ENCODE measurements at regions of chr7 and their contacts with region 1.

Region 1: DNA sequence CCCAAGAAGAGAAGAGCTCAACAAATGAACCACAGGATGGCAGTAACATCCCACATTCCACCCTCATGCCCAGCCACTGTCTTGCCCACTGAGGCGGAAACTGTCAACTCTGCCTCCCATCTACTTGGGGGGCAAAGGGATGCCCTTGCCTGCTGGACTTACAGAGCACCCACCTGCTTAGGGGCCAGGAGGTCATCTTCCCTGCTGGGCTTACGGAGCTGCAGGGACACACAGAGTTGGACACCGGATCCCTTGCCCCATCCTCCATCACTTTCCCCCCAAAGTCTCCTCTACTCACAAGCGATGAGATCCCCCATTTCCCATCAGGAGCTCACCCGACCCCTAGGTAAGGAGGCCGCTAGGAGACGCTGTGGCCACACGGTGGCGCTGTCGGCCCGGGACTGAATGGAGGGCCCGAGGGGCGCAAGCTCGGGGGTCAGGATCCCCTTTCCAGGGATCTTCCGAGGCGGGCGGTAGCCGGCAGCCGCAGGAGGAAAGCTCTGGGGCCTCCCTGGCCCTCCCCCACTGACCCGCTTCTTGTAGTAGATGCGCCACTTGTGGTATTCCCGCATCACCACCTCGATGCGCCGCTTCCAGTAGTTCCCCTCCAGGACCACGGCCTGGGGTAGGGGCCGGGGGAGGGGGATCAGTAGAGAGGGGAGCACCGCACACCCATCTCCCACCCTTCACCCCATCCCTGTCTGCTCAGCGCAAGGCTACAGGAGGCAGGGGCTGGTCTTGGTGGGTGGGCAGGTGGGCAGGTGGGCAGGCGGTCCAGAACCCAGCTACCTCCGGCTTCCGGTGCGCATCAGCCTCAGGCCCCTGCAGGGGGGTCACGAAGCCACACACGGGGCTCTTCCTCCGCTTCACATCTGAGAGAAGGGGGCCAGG is 17.3 kb downstream of the MLXIPL start:
- DNase-seq: peak; percentile 80
- ATAC-seq: peak; percentile 83
- H3K4me3 ChIP-seq: no peak overlapping the region
- H3K4me3 Mint-ChIP-seq: no peak overlapping the region
- H3K27ac ChIP-seq: no peak overlapping the region
- H3K27ac Mint-ChIP-seq: no peak overlapping the region
- H3K4me1 ChIP-seq: peaks cover 8% of the 10 kb centered on the region in 2 donors
- H3K4me1 Mint-ChIP-seq: no peaks in the 10 kb centered on the region
- H3K27me3 ChIP-seq: peaks cover 0 to 23% (median 6%) of the 10 kb centered on the region in 4 experiments
- H3K27me3 Mint-ChIP-seq: peaks cover 28% of the 10 kb centered on the region
- CTCF ChIP-seq: peak; percentile 97

Region 2: DNA sequence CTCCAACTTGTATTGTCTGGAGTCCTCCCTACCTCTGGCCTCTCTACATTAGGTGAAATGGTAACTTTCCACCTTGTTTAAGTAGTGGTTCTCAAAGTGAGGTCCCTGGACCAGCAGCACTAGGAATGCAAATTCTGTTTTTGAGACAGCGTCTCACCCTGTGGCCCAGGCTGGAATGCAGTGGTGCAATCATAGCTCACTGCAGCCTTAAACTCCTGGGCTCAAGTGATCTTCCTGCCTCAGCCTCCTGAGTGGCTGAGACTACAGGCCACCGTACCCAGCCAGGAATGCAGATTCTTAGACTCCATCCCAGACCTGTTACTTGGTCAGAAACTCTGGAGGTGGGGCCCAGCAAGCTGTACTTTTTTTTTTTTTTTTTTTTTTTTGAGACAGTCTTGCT is 21.9 kb before region 1 on chr7:
- CTCF ChIA-PET with region 1: interaction called, 18 read pairs
- POLR2A ChIA-PET with region 1: no interaction called
- intact Hi-C with region 1: no loop called
- DNase-seq: no peak
- ATAC-seq: no peak
- H3K4me3 ChIP-seq: no peak overlapping the region
- H3K4me3 Mint-ChIP-seq: no peak overlapping the region
- H3K27ac ChIP-seq: no peak overlapping the region
- H3K27ac Mint-ChIP-seq: no peak overlapping the region
- H3K4me1 ChIP-seq: peaks cover 3 to 4% of the 10 kb centered on the region in 2 donors
- H3K4me1 Mint-ChIP-seq: peaks cover 10% of the 10 kb centered on the region
- H3K27me3 ChIP-seq: no peaks in the 10 kb centered on the region
- H3K27me3 Mint-ChIP-seq: no peaks in the 10 kb centered on the region
- CTCF ChIP-seq: no peak

Region 3: DNA sequence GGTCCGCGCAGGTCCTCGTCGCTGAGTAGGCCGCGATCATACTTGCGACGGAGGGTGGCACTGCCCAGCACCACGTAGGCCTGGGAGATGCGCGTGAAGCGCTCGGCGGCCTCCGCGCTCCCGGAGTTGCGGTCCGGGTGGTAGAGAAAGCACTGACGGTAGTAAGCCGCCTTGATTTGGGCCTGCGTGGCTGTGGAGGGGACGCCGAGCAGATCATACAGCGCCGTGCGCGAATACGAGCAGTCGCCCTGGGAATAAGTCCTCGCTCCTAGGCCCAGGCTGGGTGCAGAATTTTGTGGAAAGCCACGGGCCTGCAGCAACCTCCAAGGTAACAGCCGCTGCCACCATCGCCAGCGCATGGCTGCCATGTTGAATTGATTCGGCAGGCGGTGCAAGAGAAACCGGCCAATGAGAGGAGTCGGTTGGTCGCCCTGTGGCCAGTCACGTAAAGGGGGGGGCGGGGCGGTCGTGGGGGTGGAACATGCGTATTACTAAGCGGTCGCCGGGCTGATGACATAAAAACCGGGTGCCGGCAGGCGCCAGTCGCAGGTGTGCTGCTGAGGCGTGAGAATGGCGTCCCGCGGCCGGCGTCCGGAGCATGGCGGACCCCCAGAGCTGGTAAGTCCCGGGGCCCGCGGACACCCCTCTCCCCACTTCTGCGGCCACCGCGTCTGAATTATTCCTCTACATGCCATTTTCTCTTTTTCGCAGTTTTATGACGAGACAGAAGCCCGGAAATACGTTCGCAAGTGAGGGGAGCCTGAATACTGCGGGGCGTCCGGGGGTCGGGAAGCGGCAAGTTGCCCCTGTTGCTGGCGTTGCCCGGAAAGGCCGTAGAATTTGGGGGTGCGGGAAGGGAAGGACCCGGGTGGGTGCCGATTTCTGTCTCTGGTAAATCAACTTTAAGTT is 76.3 kb after region 1 on chr7 and contains the starts of genes BUD23 and DNAJC30:
- CTCF ChIA-PET with region 1: no interaction called
- POLR2A ChIA-PET with region 1: no interaction called
- intact Hi-C with region 1: no loop called
- DNase-seq: peak; percentile 96
- ATAC-seq: peak; percentile 97
- H3K4me3 ChIP-seq: peak within 1 kb of the TSS; percentile 79 to 99 (median 95)
- H3K4me3 Mint-ChIP-seq: peak within 1 kb of the TSS; percentile 97
- H3K27ac ChIP-seq: peak within 1 kb of the TSS; percentile 81 to 90
- H3K27ac Mint-ChIP-seq: peak within 1 kb of the TSS; percentile 96
- H3K4me1 ChIP-seq: peaks cover 19 to 25% of the 10 kb centered on the region in 2 donors
- H3K4me1 Mint-ChIP-seq: peaks cover 32% of the 10 kb centered on the region
- H3K27me3 ChIP-seq: no peaks in the 10 kb centered on the region
- H3K27me3 Mint-ChIP-seq: no peaks in the 10 kb centered on the region
- CTCF ChIP-seq: no peak
- total RNA-seq, gene BUD23: 55.9 and 63.9 TPM in 2 replicates
- total RNA-seq, gene DNAJC30: 15.5 and 17.5 TPM in 2 replicates

Region 4: GRCh38 chr7:73718905-73719805 is 112.1 kb after region 1 on chr7 and contains the start of gene STX1A:
- CTCF ChIA-PET with region 1: interaction called, 93 read pairs
- POLR2A ChIA-PET with region 1: no interaction called
- intact Hi-C with region 1: no loop called
- DNase-seq: peak; percentile 82
- ATAC-seq: peak; percentile 89
- H3K4me3 ChIP-seq: peak within 1 kb of the TSS; percentile 15 to 70 (median 59)
- H3K4me3 Mint-ChIP-seq: peak within 1 kb of the TSS; percentile 83
- H3K27ac ChIP-seq: no peak within 1 kb of the TSS
- H3K27ac Mint-ChIP-seq: peak within 1 kb of the TSS; percentile 37
- H3K4me1 ChIP-seq: peaks cover 25 to 31% of the 10 kb centered on the region in 2 donors
- H3K4me1 Mint-ChIP-seq: peaks cover 20% of the 10 kb centered on the region
- H3K27me3 ChIP-seq: peaks cover 0 to 57% (median 25%) of the 10 kb centered on the region in 4 experiments
- H3K27me3 Mint-ChIP-seq: peaks cover 27% of the 10 kb centered on the region
- CTCF ChIP-seq: no peak
- total RNA-seq, gene STX1A: 3.0 and 3.1 TPM in 2 replicates

Region 5: GRCh38 chr7:73726083-73726466 is 119.0 kb after region 1 on chr7:
- CTCF ChIA-PET with region 1: interaction called, 93 read pairs
- POLR2A ChIA-PET with region 1: no interaction called
- intact Hi-C with region 1: no loop called
- DNase-seq: no peak
- ATAC-seq: no peak
- H3K4me3 ChIP-seq: no peak overlapping the region
- H3K4me3 Mint-ChIP-seq: no peak overlapping the region
- H3K27ac ChIP-seq: no peak overlapping the region
- H3K27ac Mint-ChIP-seq: no peak overlapping the region
- H3K4me1 ChIP-seq: peaks cover 0 to 2% of the 10 kb centered on the region in 2 donors
- H3K4me1 Mint-ChIP-seq: no peaks in the 10 kb centered on the region
- H3K27me3 ChIP-seq: peaks cover 0 to 27% (median 11%) of the 10 kb centered on the region in 4 experiments
- H3K27me3 Mint-ChIP-seq: peaks cover 14% of the 10 kb centered on the region
- CTCF ChIP-seq: peak; percentile 38

Region 6: DNA sequence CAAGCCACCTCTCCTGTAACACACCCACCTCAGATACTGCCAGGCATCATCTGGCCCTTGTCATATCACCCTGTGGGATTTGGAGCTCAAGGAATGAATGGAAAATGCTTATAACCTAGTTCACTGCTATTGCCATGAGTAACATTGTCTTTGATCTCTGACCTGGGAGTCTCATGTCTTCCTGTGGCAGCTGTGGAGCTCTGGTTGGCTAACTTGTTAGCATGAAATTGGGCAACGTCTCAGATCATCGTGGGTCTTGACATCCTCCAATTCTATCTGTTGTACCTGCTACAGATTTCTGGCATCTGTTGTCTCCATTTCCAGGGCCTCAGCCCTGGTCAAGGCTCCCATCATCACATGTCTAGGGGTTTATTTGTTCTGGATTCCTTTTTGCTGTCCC is 251.8 kb after region 1 on chr7:
- CTCF ChIA-PET with region 1: interaction called, 37 read pairs
- POLR2A ChIA-PET with region 1: no interaction called
- intact Hi-C with region 1: no loop called
- DNase-seq: no peak
- ATAC-seq: no peak
- H3K4me3 ChIP-seq: no peak overlapping the region
- H3K4me3 Mint-ChIP-seq: no peak overlapping the region
- H3K27ac ChIP-seq: no peak overlapping the region
- H3K27ac Mint-ChIP-seq: no peak overlapping the region
- H3K4me1 ChIP-seq: peaks cover 3 to 8% of the 10 kb centered on the region in 2 donors
- H3K4me1 Mint-ChIP-seq: peaks cover 6% of the 10 kb centered on the region
- H3K27me3 ChIP-seq: peaks cover 0 to 12% (median 2%) of the 10 kb centered on the region in 4 experiments
- H3K27me3 Mint-ChIP-seq: peaks cover 21% of the 10 kb centered on the region
- CTCF ChIP-seq: no peak

Measured in B cell (primary cell).